ENCODE measurements at regions of chr11 and their contacts with region 1.

Region 1: GRCh38 chr11:63212742-63213141 is 30.7 kb downstream of the SLC22A25 start:
- DNase-seq: peak in 1 of 6 donors; percentile 21
- ATAC-seq: peak in 2 of 4 donors; percentile 42 to 68
- H3K4me3 ChIP-seq: no peak overlapping the region
- H3K27ac ChIP-seq: no peak overlapping the region
- H3K4me1 ChIP-seq: no peaks in the 10 kb centered on the region
- H3K27me3 ChIP-seq: no peaks in the 10 kb centered on the region
- CTCF ChIP-seq: peak in 3 of 4 donors; percentile 27 to 47 (median 40)

Region 2: DNA sequence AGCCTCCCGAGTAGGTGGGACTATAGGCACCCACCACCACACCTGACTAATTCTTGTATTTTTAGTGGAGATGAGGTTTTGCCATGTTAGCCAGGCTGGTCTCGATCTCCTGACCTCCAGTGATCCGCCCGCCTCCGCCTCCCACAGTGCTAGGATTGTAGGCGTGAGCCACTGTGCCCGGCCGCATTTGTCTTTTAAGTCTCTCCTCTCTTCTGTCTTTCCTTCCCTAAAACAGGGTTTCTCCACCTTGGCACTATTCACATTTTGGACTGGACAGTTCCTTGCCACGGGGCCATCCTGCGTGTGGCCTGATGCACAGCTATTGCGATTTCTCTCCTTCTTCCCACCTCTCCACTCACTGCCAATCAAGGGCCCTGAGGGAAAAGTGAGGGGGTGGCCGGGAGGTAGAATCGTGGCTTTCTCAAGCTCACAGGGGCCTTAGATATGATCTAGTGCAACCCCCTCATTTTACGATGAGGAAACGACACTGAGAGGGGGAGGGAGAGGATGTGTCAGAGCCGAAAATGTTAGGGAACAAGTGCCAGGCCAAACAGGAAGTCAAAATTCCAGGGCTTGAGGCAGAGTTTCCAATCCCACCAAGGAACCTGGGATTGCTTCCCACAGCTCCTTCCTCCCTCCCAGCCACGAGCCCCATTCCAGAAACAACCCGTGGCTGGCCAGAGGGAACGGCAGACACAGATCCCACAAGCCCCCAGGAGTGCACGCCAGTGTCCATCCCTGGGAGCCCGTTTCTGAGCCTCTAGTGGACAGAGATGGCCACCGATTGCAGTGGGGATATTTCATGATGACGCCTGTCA is 772.7 kb before region 1 on chr11:
- intact Hi-C with region 1: no loop called
- DNase-seq: no peak
- ATAC-seq: peak in 3 of 4 donors; percentile 15 to 41 (median 35)
- H3K4me3 ChIP-seq: no peak overlapping the region
- H3K27ac ChIP-seq: no peak overlapping the region
- H3K4me1 ChIP-seq: peaks cover 0 to 3% (median 2%) of the 10 kb centered on the region in 3 donors
- H3K27me3 ChIP-seq: no peaks in the 10 kb centered on the region
- CTCF ChIP-seq: no peak

Region 3: GRCh38 chr11:62911137-62912130 is 301.3 kb before region 1 on chr11:
- intact Hi-C with region 1: loop called in 1 of 3 experiments (anchors 10 kb)
- DNase-seq: no peak
- ATAC-seq: no peak
- H3K4me3 ChIP-seq: no peak overlapping the region
- H3K27ac ChIP-seq: no peak overlapping the region
- H3K4me1 ChIP-seq: peaks cover 17 to 18% (median 18%) of the 10 kb centered on the region in 3 donors
- H3K27me3 ChIP-seq: no peaks in the 10 kb centered on the region
- CTCF ChIP-seq: no peak

Region 4: DNA sequence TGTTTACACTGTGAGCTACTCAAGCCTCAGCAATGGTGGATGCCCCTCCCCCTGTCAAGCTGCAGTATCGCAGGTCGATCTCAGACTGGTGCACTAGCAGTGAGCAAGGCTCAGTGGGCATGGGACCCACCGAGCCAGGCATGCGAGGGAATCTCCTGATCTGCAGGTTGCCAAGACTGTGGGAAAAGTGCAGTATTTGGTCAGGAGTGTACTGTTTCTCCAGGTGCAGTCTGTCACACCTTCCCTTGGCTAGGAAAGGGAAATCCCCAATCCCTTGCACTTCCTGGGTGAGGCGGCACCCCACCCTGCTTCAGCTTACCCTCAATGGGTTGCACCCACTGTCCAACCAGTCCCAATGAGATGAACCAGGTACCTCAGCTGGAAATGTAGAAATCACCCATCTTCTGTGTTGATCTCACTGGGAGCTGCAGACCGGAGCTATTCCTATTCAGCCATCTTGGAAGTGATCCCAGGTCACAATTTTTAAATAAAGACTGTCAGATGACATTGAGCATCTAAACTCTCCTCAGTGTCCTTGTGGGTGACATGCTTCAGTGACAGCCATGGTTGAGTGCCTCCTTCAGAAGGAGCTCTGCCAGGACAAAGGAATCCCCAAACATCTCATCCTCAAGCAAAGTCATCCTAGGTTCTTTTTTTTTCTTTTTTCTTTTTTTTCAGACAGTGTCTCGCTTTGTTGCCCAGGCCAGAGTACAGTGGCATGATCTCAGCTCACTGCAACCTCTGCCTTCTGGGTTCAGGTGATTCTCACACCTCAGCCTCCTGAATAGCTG is 79.6 kb before region 1 on chr11:
- intact Hi-C with region 1: loop called in 2 of 3 experiments (anchors 5 to 10 kb)
- DNase-seq: peak in 5 of 6 donors; percentile 24 to 65 (median 60)
- ATAC-seq: peak; percentile 43 to 92 (median 76)
- H3K4me3 ChIP-seq: no peak overlapping the region
- H3K27ac ChIP-seq: no peak overlapping the region
- H3K4me1 ChIP-seq: no peaks in the 10 kb centered on the region
- H3K27me3 ChIP-seq: no peaks in the 10 kb centered on the region
- CTCF ChIP-seq: no peak

Region 5: GRCh38 chr11:63142459-63142858 is 70.3 kb before region 1 on chr11:
- intact Hi-C with region 1: loop called in 1 of 3 experiments (anchors 5 kb)
- DNase-seq: no peak
- ATAC-seq: no peak
- H3K4me3 ChIP-seq: no peak overlapping the region
- H3K27ac ChIP-seq: no peak overlapping the region
- H3K4me1 ChIP-seq: peaks cover 0 to 3% (median 0%) of the 10 kb centered on the region in 3 donors
- H3K27me3 ChIP-seq: no peaks in the 10 kb centered on the region
- CTCF ChIP-seq: no peak